ENCODE measurements at regions of chr17 and their contacts with region 1.

Region 1: DNA sequence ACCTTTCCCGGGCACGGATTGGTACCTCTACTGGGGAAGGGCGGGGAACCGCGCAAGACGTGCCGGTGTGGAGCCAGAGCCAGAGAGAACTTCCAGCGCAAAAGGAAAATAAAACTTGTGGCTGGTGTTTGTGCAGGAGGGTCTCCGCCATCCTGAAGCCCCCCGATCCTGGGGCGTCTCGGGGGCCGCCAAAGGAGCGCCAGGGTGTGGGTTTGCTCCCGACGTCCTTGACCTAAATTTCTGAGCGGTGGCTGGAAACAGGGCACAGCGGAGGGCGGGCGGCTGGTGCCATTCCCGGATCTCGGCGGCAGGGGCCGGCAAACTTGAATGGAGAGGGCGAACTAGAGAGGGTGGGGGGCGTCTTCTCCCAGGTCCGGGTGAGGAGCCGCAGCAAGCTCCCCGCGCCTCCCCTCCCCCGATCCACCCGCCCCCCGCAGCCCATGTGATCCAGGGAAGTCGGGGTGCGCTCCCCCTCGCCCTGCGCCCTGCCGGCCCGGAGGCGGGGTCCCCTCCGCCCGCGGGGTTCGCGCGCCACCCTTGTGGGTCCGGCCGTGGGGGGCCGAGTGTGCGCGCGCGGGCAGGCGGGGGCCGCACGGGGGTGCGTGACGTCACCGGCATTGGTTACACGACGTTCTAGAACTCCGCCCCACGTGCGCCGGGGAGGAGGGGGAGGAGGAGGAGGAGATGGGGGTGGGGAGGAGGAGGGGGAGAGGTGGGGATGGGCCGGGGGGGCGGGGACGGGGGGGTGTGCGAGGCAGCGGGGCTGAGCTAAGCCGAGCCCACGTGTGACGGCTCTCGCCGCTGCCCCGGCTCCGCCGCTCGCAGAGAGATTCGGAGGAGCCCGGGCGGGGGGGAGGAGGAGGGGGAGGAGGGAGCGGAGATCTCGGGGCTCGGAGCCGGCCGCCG is at the start of gene MSI2:
- DNase-seq: peak; percentile 97
- H3K4me3 Mint-ChIP-seq: peak within 1 kb of the TSS; percentile 89
- H3K27ac Mint-ChIP-seq: peak within 1 kb of the TSS; percentile 91
- H3K4me1 Mint-ChIP-seq: peaks cover 42% of the 10 kb centered on the region
- H3K27me3 Mint-ChIP-seq: peaks cover 7% of the 10 kb centered on the region
- total RNA-seq, gene MSI2: 171 and 172 TPM in 2 replicates

Region 2: GRCh38 chr17:57284984-57285646 is 29.1 kb after region 1 on chr17:
- intact Hi-C with region 1: loop called (anchors 1 kb)
- DNase-seq: peak; percentile 90
- H3K4me3 Mint-ChIP-seq: peak overlapping the region; percentile 76
- H3K27ac Mint-ChIP-seq: peak overlapping the region; percentile 91
- H3K4me1 Mint-ChIP-seq: peaks cover 82% of the 10 kb centered on the region
- H3K27me3 Mint-ChIP-seq: no peaks in the 10 kb centered on the region

Region 3: DNA sequence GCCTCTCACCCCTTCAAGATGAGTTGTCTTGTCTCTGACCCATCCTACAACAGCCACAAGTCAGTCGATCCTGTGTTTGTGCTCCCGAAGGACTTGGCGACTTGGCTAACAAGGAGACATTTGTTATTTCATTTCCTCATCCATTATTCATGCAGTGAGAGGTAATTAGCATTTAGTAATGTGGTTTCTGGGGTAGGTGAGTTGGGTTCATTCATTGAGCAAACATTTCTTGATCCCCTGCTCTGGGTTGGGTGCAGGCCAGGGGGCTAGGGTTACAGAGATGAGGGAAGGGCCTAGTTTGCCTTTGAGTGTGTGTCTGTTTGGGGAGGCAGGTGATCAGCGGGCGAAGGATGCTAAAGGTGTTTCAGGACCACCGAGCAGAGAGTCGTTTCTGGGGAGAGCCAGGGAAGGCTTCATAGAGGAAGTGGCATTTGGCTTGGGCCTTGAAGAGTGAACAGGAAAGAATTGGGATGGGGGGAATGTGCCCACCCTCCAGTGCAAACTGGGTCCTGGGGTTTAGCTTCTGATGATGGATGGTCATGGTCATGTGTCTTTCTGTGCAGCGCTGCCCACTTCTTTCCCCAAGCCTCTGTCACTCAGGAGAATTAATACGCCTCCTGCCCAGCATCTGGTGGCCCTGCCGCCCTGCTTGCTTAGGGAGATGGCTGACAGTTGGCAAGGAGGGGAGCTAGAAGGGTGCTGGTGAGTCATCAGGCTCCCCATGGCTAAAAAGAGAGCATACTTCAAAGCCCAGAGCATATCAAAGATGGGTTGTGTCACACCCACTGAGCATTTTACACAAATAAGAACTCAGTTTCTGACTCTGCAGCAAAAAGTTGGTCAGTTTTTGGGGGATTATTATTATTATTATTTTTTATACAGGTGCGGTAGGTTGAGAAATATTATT is 38.9 kb after region 1 on chr17:
- intact Hi-C with region 1: loop called (anchors 5 kb)
- DNase-seq: peak; percentile 71
- H3K4me3 Mint-ChIP-seq: peak overlapping the region; percentile 57
- H3K27ac Mint-ChIP-seq: peak overlapping the region; percentile 76
- H3K4me1 Mint-ChIP-seq: peaks cover 30% of the 10 kb centered on the region
- H3K27me3 Mint-ChIP-seq: no peaks in the 10 kb centered on the region

Measured in activated CD4-positive, alpha-beta T cell treated with anti-CD3 and anti-CD28 coated beads, Interleukin-2, amount 10 ng/mL, durations not matched to agents 24 days and 14 days (primary cell).